ENCODE measurements at regions of chr17 and their contacts with region 1.

Region 1: DNA sequence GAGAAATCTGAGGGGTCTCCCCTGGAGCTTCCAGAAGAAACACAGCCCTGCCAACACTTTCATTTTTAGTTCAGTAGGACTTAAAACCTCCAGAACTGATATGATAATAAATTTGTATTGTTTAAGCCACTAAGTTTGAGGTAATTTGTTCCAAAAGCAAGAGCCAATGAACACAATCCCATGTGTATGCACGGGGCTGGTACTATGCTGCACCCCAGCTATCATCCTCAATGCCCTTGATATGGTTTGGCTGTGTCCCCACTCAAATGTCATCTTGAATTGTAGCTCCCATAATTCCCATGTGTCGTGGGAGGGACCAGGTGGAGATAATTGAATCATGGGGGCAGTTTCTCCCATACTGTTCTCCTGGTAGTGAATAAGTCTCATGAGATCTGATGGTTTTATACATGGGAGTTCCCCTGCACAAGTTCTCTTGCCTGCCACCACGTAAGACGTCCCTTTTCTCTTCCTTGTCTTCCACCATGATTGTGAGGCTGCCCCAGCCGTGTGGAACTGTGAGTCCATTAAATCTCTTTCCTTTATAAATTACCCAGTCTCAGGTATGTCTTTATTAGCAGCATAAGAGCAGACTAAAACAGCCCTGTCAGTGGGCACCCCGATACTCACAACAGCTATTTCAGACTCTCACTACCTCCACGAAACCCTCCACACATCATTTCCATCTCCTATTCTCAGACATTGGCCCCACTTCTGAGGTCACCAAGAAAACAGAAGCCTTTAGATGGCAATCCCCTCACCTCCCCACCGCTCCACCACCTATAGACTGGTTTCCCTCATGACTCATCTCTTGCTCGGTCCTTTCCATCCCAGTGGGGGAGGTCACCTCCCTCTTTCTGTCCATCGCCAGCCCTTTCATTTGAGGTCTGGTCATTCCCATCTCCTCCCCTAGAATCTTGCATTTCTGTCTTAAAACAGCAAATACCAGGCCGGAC is 8.9 kb upstream of the CACNG1 start:
- DNase-seq: no peak
- H3K4me3 ChIP-seq: no peak overlapping the region
- H3K27ac ChIP-seq: no peak overlapping the region
- H3K4me1 ChIP-seq: no peaks in the 10 kb centered on the region
- H3K27me3 ChIP-seq: no peaks in the 10 kb centered on the region
- CTCF ChIP-seq: no peak

Region 2: DNA sequence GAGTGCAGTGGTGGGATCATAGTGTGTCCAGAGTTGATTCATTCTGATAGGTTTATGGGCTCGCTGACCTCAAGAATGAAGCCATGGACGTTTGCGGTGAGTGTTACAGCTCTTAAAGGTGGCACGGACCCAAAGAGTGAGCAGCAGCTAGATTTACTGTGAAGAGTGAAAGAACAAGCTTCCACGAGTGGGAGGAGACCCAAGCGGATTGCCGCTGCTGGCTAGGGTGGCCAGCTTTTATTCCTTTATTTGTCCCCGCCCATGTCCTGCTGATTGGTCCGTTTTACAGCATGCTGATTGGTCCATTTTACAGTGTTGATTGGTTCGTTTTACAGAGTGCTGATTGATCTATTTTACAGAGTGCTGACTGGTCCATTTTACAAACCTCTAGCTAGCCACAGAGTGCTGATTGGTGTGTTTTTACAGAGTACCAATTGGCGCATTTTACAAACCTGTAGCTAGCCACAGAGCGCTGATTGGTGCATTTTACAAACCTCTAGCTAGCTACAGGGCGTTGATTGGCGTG is 53.4 kb before region 1 on chr17:
- CTCF ChIA-PET with region 1: no interaction called
- dilution Hi-C with region 1: loop called (anchors 5 kb)
- in situ Hi-C with region 1: no loop called
- intact Hi-C with region 1: no loop called
- DNase-seq: no peak
- H3K4me3 ChIP-seq: no peak overlapping the region
- H3K27ac ChIP-seq: no peak overlapping the region
- H3K4me1 ChIP-seq: peaks cover 17% of the 10 kb centered on the region
- H3K27me3 ChIP-seq: no peaks in the 10 kb centered on the region
- CTCF ChIP-seq: no peak

Region 3: DNA sequence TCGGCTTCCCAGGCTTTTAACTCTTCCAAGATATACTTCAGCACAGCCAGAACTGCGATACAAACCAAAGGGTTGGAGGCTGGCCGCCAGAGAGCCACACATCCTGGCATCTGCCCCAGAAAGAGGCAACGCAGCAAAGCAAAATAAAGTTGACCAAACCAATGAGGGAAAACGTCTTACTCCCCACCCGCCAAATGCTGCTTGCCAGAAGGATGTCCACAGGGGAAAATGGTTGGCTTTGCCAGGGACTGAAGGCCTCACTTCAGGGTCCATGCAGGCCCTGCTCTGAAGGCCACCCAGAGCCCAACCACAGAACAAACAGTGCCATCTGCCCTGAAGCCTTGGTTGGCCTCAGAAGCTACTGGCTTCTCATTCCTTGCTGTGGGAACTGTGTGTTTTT is 24.0 kb after region 1 on chr17:
- CTCF ChIA-PET with region 1: no interaction called
- dilution Hi-C with region 1: no loop called
- in situ Hi-C with region 1: no loop called
- intact Hi-C with region 1: no loop called
- DNase-seq: no peak
- H3K4me3 ChIP-seq: no peak overlapping the region
- H3K27ac ChIP-seq: no peak overlapping the region
- H3K4me1 ChIP-seq: no peaks in the 10 kb centered on the region
- H3K27me3 ChIP-seq: no peaks in the 10 kb centered on the region
- CTCF ChIP-seq: no peak

Measured in mammary epithelial cell (primary cell).